ENCODE measurements at regions of chr11 and their contacts with region 1.

Region 1: GRCh38 chr11:110376711-110377324 is 52.9 kb upstream of the FDX1 start:
- DNase-seq: no peak
- H3K4me3 ChIP-seq: peak overlapping the region in 1 of 2 donors; percentile 7
- H3K27ac ChIP-seq: no peak overlapping the region
- H3K4me1 ChIP-seq: peaks cover 6% of the 10 kb centered on the region
- H3K27me3 ChIP-seq: no peaks in the 10 kb centered on the region
- CTCF ChIP-seq: peak; percentile 38 to 53 (median 52)
- POLR2A ChIP-seq: no peak

Region 2: DNA sequence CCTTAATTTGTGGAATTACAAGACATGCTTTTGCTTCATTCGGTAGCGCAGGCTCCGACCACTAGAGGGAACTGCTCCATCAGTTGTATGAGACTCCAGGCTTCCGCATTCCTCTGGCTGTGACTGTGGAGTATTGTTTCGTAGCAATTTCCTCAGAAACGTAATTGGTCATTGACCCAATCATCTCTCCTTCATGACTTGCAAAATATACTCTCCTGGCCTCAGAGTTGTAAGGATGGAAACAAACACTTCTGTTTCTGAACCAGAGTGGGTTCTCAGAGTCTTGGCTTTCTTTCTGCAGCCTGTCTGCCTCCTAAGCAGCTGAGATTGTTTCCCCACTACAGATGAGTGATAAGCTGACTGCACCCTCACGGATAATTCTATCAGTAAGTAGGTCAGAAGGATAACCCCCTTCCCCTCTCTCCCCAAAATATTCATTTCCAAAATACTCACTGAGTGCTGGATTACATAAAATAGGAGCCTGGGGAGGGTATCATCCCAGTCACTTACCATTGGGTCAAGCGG is 430.4 kb before region 1 on chr11:
- intact Hi-C with region 1: loop called (anchors 10 kb)
- DNase-seq: peak in 1 of 2 donors; percentile 90
- H3K4me3 ChIP-seq: peak overlapping the region; percentile 13 to 16
- H3K27ac ChIP-seq: no peak overlapping the region
- H3K4me1 ChIP-seq: no peaks in the 10 kb centered on the region
- H3K27me3 ChIP-seq: no peaks in the 10 kb centered on the region
- CTCF ChIP-seq: peak; percentile 74 to 91 (median 84)
- POLR2A ChIP-seq: no peak

Region 3: DNA sequence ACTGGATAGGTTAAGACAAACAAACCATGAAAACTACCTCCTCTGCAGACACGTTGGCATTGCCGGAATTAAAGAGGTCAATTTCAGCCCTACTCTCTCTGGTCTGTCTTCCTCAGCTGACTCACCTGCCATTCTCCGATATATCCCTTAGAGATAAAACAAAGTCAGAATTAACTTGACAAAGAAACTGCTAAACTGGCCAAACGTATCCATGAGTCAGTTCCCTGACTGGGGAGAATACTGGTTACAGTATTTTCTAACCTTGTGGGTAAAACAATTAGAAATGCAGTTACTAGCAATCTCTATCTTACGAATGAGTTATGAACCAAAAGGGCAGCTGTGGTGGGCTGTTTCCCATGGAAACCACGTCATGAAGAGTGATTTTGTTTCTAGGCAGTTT is 176.6 kb before region 1 on chr11:
- intact Hi-C with region 1: loop called (anchors 5 kb)
- DNase-seq: no peak
- H3K4me3 ChIP-seq: no peak overlapping the region
- H3K27ac ChIP-seq: no peak overlapping the region
- H3K4me1 ChIP-seq: no peaks in the 10 kb centered on the region
- H3K27me3 ChIP-seq: no peaks in the 10 kb centered on the region
- CTCF ChIP-seq: no peak
- POLR2A ChIP-seq: no peak

Region 4: DNA sequence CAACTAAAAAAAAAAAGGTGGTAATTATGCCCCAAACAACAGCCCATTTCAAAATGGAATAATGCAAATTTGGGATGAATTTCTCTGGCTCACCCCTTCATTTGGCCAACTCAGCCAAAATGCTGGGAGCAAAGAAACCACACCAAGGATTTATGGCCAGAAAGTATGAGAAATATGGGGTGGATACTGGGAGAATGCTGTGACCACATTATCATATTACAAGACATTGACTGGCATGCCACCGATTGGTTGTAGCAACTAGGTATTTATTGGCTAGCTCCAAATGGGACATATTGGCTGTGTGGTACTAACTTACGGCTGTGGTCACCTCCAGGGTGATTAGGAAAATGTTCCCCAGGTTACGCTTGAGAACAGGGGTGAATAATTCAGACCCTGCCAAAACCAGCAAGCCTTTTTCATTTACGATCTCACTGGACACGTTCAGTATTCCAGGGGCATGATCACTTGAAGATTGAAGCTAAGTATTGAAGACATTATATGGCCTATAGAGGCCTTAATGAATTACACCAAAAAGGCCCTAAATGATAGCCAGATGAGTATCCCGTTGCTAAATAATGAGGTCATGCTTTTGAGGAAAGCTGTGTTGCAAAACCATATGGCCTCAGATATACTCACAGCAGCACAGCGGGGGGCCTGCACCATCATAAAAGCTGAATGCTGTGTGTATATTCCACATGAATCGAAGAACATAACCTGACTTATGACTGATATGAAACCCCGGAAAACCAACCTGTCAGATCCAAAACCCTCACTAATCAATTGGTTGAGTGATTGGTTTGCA is 49.1 kb after region 1 on chr11:
- intact Hi-C with region 1: no loop called
- DNase-seq: no peak
- H3K4me3 ChIP-seq: no peak overlapping the region
- H3K27ac ChIP-seq: no peak overlapping the region
- H3K4me1 ChIP-seq: peaks cover 11% of the 10 kb centered on the region
- H3K27me3 ChIP-seq: no peaks in the 10 kb centered on the region
- CTCF ChIP-seq: no peak
- POLR2A ChIP-seq: no peak